GM12878 (cell line): ENCODE measurements at regions of chr7 and their contacts with region 1.

Region 1: DNA sequence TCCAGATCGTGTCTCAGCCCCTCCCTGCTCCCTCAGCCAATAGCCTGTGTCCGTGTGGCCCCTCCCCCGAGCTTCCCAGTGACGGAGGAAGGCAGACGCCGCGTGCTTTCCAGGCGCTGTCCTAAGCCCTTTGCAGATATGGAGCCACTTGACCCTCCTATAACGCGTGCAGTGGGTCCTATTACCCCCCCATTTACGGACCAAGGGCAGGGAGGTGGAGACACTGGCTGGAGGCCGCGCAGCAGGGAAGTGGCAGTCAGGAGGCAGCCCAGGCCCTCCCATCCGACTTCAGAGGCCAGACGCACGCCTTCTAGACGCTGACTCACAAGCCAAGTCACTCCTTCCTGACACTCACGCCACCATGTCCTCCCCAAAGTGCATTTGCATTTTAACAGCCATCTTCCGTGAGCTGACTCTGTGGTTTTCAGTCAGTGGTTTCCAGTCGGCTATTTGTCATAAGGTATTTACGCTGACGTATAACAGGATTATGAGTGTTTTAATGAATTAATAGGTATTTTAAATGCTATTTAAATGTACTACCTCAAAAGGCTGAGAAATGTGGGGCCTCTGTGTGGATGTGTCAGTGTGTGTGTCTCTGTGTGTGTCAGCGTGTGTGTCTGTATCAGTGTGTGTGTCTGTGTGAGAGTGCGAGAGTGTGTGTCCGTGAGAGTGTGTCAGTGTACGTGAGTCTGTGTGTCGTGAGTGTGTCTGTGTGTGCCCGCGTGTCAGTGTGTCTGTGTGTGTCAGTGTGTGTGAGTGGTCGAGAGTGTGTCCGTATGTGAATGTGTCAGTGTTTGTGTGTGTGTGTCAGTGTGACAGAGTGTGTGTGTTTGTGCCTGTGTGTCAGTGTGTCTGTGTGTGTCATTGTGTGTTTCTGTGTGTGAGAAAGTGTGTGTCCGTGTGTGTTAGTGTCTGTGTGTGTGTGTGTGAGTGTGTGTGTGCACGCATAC is 92.0 kb upstream of the INSIG1 start:
- DNase-seq: peak; percentile 99
- ATAC-seq: peak; percentile 91
- H3K4me3 ChIP-seq: peak overlapping the region; percentile 76
- H3K27ac ChIP-seq: peak overlapping the region; percentile 97
- H3K4me1 ChIP-seq: peaks cover 23% of the 10 kb centered on the region
- H3K27me3 ChIP-seq: no peaks in the 10 kb centered on the region
- CTCF ChIP-seq: no peak
- EP300 ChIP-seq: peak; percentile 96 to 98
- POLR2A ChIP-seq: peak; percentile 90
- RAD21 ChIP-seq: no peak

Region 2: DNA sequence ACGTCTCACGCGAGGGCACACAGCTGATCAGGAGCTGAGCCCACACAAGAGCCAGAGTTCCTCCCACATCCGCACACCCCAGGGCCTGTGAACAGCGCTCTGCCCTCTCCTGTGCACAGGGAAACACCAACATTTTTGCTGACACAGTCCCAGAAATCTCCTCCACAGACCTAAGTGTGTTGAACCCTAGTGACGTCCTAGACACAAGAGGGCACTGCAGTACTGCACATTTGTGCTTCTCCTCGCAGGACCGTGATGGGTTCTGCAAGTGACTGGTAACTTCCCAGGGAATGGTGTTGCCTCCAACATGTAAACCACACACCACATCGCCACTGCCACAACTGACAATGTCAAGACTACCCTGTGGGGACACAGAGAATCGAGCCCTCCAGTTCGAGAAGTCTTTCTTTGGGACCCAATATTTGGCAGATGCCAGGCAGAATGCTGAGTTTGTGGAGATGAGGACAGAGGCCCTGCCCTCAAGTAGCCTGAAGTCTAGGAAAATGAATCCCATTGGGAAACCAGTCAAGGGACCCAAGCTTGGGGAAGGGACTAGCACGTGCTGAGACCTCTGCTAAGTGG is 373.0 kb before region 1 on chr7:
- CTCF ChIA-PET with region 1: no interaction called
- POLR2A ChIA-PET with region 1: no interaction called
- RAD21 ChIA-PET with region 1: no interaction called
- SMC1A ChIA-PET with region 1: no interaction called
- in situ Hi-C with region 1: no loop called
- intact Hi-C with region 1: loop called (anchors 10 kb)
- DNase-seq: no peak
- ATAC-seq: peak; percentile 86
- H3K4me3 ChIP-seq: no peak overlapping the region
- H3K27ac ChIP-seq: no peak overlapping the region
- H3K4me1 ChIP-seq: peaks cover 4% of the 10 kb centered on the region
- H3K27me3 ChIP-seq: no peaks in the 10 kb centered on the region; a peak in 1 of 4 replicates
- CTCF ChIP-seq: peak; percentile 32 to 65 (median 38); a peak in 4 of 6 replicates
- EP300 ChIP-seq: no peak
- POLR2A ChIP-seq: no peak
- RAD21 ChIP-seq: peak; percentile 52

Region 3: DNA sequence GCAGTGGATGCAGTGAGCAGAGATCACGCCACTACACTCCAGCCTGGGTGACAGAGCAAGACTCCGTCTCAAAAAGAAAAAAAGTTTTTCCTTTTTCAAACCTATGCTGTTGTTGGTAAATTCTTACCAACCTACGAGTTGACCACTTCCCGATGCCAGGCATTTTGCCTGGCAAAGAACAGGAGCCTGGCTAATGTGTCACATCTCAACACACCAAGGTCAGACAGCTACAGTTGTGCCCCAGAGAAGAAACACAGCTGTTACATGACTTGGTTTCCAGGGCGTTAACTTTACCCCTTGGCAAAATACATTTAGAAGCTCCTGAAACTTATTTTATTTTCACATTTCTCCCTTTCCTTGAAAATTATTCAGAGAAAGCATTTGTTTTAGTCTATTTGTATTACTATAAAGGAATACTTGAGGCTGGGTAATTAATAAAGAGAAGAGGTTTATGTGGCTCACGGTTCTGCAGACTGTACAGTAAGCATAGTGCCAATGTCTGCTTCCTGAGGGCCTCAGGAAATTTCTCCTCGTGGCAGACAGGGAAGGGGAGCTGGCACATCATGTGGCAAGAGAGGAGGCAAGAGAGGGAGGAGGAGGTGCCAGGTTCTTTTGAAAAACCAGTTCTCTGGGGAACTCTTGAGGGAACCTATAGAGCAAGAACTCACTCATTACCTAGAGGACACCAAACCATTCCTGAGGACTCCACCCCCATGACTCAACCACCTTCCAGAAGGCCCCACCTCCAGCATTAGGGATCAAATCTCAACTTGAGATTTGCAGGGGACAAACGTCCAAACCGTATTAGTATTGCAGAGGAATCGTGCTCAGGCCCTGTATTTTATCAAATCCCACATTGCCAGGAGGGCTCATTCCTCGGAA is 286.1 kb before region 1 on chr7:
- CTCF ChIA-PET with region 1: no interaction called
- POLR2A ChIA-PET with region 1: no interaction called
- RAD21 ChIA-PET with region 1: no interaction called
- SMC1A ChIA-PET with region 1: no interaction called
- in situ Hi-C with region 1: no loop called
- intact Hi-C with region 1: no loop called
- DNase-seq: no peak
- ATAC-seq: no peak
- H3K4me3 ChIP-seq: no peak overlapping the region
- H3K27ac ChIP-seq: no peak overlapping the region
- H3K4me1 ChIP-seq: no peaks in the 10 kb centered on the region
- H3K27me3 ChIP-seq: no peaks in the 10 kb centered on the region; a peak in 1 of 4 replicates
- CTCF ChIP-seq: no peak
- EP300 ChIP-seq: no peak
- POLR2A ChIP-seq: no peak
- RAD21 ChIP-seq: no peak

Region 4: DNA sequence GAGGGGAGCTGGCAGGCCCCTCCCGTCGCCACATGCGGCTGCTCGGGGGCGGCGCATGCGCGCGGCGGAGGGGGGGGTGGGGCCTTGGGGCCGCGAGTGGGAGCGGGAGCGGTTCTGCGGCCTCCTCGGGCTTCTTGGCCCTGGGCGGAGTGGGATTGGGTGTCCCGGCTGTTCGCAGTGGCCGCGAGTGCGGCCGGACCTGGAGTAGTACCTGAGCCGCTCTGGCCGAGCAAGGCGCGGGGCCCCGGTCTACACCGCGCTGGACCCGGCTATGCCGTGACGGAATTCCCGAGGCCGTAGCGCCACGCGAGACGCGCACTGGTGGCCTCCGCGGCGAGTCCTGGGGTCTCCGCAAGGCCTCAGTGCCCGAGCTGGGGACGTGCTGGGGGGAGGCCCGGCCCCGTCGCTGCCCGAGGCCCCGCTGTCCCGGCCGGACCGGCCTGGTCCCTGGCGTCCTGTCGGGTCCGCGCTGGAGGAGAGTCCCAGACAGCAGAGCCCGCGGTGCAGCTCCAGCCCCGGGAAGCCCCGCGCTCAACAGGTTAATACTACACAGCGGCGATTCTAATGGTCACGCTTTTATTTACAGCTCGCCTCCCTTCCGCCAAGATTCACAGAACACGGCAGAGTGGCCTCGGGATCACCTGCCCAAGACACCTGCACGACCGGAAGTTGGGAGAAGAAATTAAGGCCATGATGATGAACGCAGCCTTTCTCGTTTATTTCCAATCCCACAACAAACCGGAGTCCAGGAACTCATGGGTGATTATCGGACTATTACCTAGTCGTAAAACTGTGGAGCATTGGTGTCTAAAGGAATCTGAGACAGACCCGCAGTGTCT is 202.0 kb before region 1 on chr7:
- CTCF ChIA-PET with region 1: interaction called, 3 read pairs
- POLR2A ChIA-PET with region 1: interaction called, 9 read pairs
- RAD21 ChIA-PET with region 1: interaction called, 8 read pairs
- SMC1A ChIA-PET with region 1: no interaction called
- in situ Hi-C with region 1: no loop called
- intact Hi-C with region 1: loop called (anchors 5 kb)
- DNase-seq: no peak
- ATAC-seq: peak; percentile 75
- H3K4me3 ChIP-seq: peak overlapping the region; percentile 77
- H3K27ac ChIP-seq: peak overlapping the region; percentile 93
- H3K4me1 ChIP-seq: 0 out of 2 replicates have a peak, but pooled peaks cover 5% of the 10 kb centered on the region
- H3K27me3 ChIP-seq: no peaks in the 10 kb centered on the region
- CTCF ChIP-seq: no peak
- EP300 ChIP-seq: no peak
- POLR2A ChIP-seq: peak; percentile 87
- RAD21 ChIP-seq: no peak

Region 5: DNA sequence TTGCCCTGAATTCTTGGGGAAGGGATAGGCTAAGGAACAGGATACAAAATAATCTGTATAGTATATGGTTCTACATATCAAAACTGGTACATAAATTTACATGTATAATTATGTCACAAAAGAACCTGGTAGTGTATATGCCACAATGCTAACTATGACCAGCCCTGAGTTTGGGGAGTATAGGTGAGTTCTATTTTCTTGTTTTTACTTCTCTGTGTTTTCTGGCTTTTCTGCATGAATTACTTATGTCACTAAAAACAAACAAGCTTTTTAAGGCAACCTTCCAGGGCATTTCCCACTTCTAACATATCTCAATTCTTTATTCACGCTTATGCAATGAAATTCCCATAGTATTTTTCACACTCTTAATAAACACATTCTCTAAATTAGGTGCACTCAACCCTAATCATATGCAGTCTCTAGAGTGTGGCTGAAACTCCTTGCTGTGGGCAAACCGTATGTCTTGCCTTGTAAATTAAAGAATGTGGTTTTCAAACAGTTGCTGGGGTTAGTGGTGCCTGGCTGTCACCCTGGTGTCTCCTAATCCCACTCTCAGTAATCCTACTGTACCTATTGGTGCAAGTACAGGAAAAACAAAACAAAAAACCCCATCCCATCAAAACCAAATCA is 78.0 kb after region 1 on chr7:
- CTCF ChIA-PET with region 1: interaction called, 3 read pairs
- POLR2A ChIA-PET with region 1: no interaction called
- RAD21 ChIA-PET with region 1: interaction called, 3 read pairs
- SMC1A ChIA-PET with region 1: interaction called, 3 read pairs
- in situ Hi-C with region 1: no loop called
- intact Hi-C with region 1: loop called (anchors 5 kb)
- DNase-seq: peak; percentile 38
- ATAC-seq: peak; percentile 93
- H3K4me3 ChIP-seq: no peak overlapping the region
- H3K27ac ChIP-seq: no peak overlapping the region
- H3K4me1 ChIP-seq: peaks cover 24% of the 10 kb centered on the region
- H3K27me3 ChIP-seq: no peaks in the 10 kb centered on the region; a peak in 1 of 4 replicates
- CTCF ChIP-seq: no peak
- EP300 ChIP-seq: peak; percentile 68 to 72; a peak in 3 of 4 replicates
- POLR2A ChIP-seq: no peak
- RAD21 ChIP-seq: no peak

Region 6: GRCh38 chr7:155344600-155345433 is 139.2 kb after region 1 on chr7:
- CTCF ChIA-PET with region 1: interaction called, 17 read pairs
- POLR2A ChIA-PET with region 1: interaction called, 5 read pairs
- RAD21 ChIA-PET with region 1: interaction called, 9 read pairs
- SMC1A ChIA-PET with region 1: interaction called, 5 read pairs
- in situ Hi-C with region 1: no loop called
- intact Hi-C with region 1: loop called (anchors 5 kb)
- DNase-seq: no peak
- ATAC-seq: peak; percentile 98
- H3K4me3 ChIP-seq: peak overlapping the region; percentile 63; the same call in 1 of the 2 replicates
- H3K27ac ChIP-seq: no peak overlapping the region
- H3K4me1 ChIP-seq: peaks cover 5% of the 10 kb centered on the region; the same call in 1 of the 2 replicates
- H3K27me3 ChIP-seq: no peaks in the 10 kb centered on the region
- CTCF ChIP-seq: peak; percentile 71 to 73 (median 72); a peak in 5 of 6 replicates
- EP300 ChIP-seq: no peak
- POLR2A ChIP-seq: peak; percentile 29; the same call in 1 of the 2 replicates
- RAD21 ChIP-seq: peak; percentile 90

Region 7: DNA sequence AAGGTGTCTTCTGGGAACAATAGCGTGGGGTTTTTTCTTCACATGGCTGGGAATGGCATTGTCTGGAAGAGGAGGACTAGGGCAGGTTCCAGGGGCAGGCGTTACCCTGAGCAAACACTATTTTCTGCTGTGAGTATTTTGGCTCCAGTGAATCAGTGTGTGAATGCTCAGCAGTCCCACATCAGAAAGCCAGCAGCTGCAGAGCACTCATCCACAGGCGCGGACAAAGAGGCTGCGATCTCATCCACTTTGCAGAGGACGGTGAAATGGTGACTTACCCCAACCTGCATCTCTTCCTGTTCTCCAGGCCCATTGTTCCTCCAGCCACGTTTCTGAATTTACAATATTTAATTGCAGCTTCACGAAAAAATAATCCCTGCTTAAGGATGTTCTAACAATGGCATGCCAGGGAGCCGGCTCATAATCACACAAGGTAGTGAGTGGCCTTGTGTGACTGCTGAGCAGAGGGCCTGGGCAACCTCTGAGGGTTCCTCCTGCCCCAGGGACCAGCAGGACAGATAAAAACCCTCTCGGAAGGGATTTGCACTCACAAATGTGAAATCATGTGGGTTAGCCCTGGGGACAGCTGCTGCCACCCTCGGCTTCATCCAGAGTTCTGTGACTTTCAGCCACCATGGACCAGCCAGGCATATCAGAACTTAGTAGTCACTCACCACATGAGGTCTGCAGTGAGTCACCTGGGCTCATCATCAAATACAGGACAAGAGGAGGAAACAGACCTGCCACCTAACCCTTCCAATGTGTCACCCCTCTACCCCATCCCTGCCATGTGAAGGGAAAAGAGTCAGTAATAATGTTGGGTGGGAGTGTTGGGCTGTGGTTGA is 187.3 kb after region 1 on chr7:
- CTCF ChIA-PET with region 1: no interaction called
- POLR2A ChIA-PET with region 1: no interaction called
- RAD21 ChIA-PET with region 1: no interaction called
- SMC1A ChIA-PET with region 1: no interaction called
- in situ Hi-C with region 1: no loop called
- intact Hi-C with region 1: no loop called
- DNase-seq: no peak
- ATAC-seq: no peak
- H3K4me3 ChIP-seq: no peak overlapping the region
- H3K27ac ChIP-seq: no peak overlapping the region
- H3K4me1 ChIP-seq: no peaks in the 10 kb centered on the region
- H3K27me3 ChIP-seq: peaks cover 0 to 5% of the 10 kb centered on the region in 2 experiments; a peak in 2 of 4 replicates
- CTCF ChIP-seq: no peak
- EP300 ChIP-seq: no peak
- POLR2A ChIP-seq: no peak
- RAD21 ChIP-seq: no peak

Region 8: GRCh38 chr7:155752756-155753445 is 547.3 kb after region 1 on chr7:
- CTCF ChIA-PET with region 1: no interaction called
- POLR2A ChIA-PET with region 1: no interaction called
- RAD21 ChIA-PET with region 1: no interaction called
- SMC1A ChIA-PET with region 1: no interaction called
- in situ Hi-C with region 1: loop called (anchors 10 kb)
- intact Hi-C with region 1: loop called (anchors 10 kb)
- DNase-seq: peak; percentile 61
- ATAC-seq: peak; percentile 79
- H3K4me3 ChIP-seq: peak overlapping the region; percentile 59
- H3K27ac ChIP-seq: peak overlapping the region; percentile 86
- H3K4me1 ChIP-seq: peaks cover 48% of the 10 kb centered on the region
- H3K27me3 ChIP-seq: no peaks in the 10 kb centered on the region
- CTCF ChIP-seq: no peak
- EP300 ChIP-seq: no peak
- POLR2A ChIP-seq: no peak
- RAD21 ChIP-seq: 0 out of 2 replicates have a peak, but pooled peaks have one; percentile 2